PC-9 (cell line): ENCODE measurements at regions of chr6 and their contacts with region 1.

Region 1: GRCh38 chr6:105424175-105424783 is 21.4 kb upstream of the PREP start:
- DNase-seq: peak; percentile 43 to 57
- H3K4me3 ChIP-seq: no peak overlapping the region
- H3K27ac ChIP-seq: no peak overlapping the region
- H3K4me1 ChIP-seq: peaks cover 21% of the 10 kb centered on the region
- H3K27me3 ChIP-seq: no peaks in the 10 kb centered on the region
- CTCF ChIP-seq: peak; percentile 87

Region 2: DNA sequence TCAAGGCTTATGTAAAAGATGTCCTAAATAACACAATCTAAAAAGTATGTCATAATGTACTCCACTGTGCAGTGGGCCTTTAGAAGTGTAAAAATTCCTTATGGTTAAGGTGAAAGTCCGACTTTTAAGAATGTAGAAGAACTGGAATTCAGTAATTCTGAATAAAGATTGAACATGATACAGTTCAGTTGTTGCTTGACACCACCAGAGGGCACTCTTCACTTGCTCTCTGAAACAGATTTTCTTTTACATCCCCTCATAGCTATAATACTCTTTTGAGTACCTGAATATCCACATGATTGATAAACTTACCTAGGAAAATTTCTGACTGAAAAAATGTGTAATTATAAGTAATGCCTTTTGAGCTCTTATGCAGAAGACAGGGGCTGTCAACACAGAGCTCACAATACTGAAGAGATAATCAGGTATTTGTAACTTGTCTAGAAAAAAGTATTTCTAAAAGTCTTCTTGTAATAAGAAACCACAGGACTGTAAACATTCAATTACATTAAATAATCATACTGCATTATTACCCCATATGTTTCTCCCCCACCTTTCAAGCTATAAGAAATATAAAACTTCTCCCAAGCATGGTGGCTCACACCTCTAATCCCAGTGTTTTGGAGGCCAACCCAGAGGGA is 336.6 kb before region 1 on chr6:
- CTCF ChIA-PET with region 1: interaction called, 4 read pairs
- POLR2A ChIA-PET with region 1: no interaction called
- intact Hi-C with region 1: loop called (anchors 1 kb)
- DNase-seq: peak; percentile 16 to 75
- H3K4me3 ChIP-seq: no peak overlapping the region
- H3K27ac ChIP-seq: no peak overlapping the region
- H3K4me1 ChIP-seq: peaks cover 4% of the 10 kb centered on the region; the same call in 1 of the 2 replicates
- H3K27me3 ChIP-seq: no peaks in the 10 kb centered on the region
- CTCF ChIP-seq: peak; percentile 96

Region 3: DNA sequence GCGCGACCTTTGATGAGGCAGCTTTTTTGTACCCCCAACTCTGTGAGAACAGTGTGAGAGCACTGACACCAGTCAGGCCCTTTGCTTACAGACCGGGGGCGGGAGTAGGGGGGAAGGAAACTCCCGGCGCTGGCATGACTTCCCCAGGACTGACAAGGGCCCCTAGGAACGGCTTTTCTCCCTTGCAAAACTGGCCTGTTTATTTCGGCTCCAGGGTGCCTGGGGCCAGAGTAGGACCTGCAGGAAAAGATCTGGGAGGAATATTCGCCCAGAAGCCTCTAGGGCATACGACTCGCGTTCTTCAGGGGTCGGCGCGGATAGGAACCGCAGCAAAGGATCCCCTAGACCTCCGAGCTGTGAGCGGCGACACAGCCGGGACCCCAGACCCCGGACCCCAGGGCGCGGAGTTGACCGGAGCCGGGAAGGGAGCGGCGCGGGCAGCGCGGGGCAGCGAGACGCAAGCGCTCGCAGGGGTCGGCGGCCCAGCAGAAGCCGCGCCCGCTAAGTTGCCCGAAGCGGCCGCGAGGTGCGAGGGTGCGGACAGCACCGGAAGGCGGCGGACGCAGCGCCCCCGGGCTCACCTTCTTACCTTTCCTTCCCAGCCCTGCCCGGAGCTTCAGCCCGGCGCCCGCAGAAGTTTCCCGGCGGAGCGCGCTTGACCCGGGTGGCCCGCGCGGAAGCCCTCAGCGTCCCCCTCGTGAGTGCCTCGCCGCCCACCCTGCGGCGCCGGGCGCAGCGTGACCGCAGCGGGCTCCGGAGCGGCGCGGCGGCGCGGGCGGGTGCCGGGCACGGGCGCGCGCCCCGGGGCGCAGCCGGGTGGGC is 244.8 kb before region 1 on chr6 and contains the start of gene POPDC3:
- CTCF ChIA-PET with region 1: no interaction called
- POLR2A ChIA-PET with region 1: no interaction called
- intact Hi-C with region 1: loop called (anchors 10 kb)
- DNase-seq: peak; percentile 49 to 64
- H3K4me3 ChIP-seq: peak within 1 kb of the TSS; percentile 86
- H3K27ac ChIP-seq: peak within 1 kb of the TSS; percentile 94
- H3K4me1 ChIP-seq: peaks cover 30% of the 10 kb centered on the region
- H3K27me3 ChIP-seq: no peaks in the 10 kb centered on the region
- CTCF ChIP-seq: no peak
- total RNA-seq, gene POPDC3: 14.8 and 24.2 TPM in 2 replicates

Region 4: DNA sequence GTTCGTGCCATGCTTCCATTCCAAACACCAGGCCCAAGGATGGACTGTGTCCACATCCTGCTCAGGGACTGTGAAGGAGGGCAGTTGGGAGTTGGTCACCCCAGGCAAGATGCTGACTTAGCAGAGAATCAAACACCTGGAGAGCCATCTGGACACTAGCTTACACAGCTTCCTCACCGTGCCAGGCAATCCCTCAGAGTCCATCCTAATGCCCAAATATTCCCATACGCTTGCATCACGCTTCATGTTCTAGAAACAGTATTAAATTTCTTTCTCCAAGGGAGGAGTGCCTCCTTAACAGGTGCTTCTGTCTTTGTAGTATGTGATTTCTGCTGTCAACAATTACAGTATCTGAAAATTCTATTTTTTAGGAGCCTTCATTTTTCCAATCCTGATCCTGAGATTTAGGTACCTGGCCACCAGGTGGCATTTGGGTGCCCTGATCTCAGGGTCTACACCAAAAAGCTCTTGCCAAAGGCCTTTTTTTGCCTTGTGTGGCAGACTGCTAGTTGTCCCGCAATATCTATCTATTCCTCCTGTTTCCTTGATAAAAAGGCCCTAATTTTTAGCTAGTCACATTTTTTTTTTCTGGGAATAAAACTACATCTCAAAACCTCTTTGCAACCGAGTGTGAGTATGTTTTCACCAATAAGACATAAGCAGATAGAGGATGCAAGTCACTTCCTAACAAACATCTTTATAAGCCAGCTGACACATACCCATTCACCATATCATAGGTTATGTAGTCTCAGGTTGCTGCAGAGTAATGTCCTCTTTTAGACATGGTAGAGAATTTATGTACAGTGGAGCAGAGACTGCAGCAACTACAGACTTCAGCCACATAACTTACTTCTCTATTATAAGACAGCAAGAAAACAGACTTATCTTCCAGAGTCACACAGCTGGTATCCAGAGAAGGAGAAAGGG is 106.4 kb before region 1 on chr6:
- CTCF ChIA-PET with region 1: no interaction called
- POLR2A ChIA-PET with region 1: no interaction called
- intact Hi-C with region 1: loop called (anchors 5 kb)
- DNase-seq: peak; percentile 24 to 44
- H3K4me3 ChIP-seq: no peak overlapping the region
- H3K27ac ChIP-seq: no peak overlapping the region
- H3K4me1 ChIP-seq: no peaks in the 10 kb centered on the region
- H3K27me3 ChIP-seq: no peaks in the 10 kb centered on the region
- CTCF ChIP-seq: peak; percentile 82

Region 5: DNA sequence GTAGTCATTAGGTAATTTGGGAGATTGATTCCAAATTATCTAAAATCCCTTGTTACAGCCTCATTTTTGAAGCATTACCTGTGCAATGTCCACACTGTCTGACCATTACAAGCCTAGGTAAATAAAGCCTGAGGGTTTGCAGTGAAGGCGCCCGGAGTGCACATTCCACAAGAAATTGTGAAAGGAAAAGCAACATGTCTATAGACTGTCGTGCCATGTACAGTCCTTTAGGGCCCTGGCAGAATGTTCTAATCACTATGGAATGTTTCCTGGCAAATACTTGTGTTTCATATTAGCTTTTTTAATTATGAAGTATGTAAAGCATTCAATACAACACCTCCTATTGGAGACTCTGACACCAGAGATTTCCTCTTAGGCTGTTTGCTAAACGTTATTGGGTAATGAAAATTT is 50.3 kb before region 1 on chr6:
- CTCF ChIA-PET with region 1: interaction called, 22 read pairs
- POLR2A ChIA-PET with region 1: no interaction called
- intact Hi-C with region 1: no loop called
- DNase-seq: peak; percentile 72 to 100
- H3K4me3 ChIP-seq: peak overlapping the region; percentile 6; the same call in 1 of the 2 replicates
- H3K27ac ChIP-seq: peak overlapping the region; percentile 86
- H3K4me1 ChIP-seq: peaks cover 38% of the 10 kb centered on the region
- H3K27me3 ChIP-seq: no peaks in the 10 kb centered on the region
- CTCF ChIP-seq: 0 out of 2 replicates have a peak, but pooled peaks have one; percentile 21

Region 6: GRCh38 chr6:105646391-105646867 is 222.2 kb after region 1 on chr6:
- CTCF ChIA-PET with region 1: no interaction called
- POLR2A ChIA-PET with region 1: no interaction called
- intact Hi-C with region 1: no loop called
- DNase-seq: peak in 1 of 2 experiments; percentile 46
- H3K4me3 ChIP-seq: no peak overlapping the region
- H3K27ac ChIP-seq: no peak overlapping the region
- H3K4me1 ChIP-seq: no peaks in the 10 kb centered on the region
- H3K27me3 ChIP-seq: no peaks in the 10 kb centered on the region
- CTCF ChIP-seq: no peak